WTC11 (cell line): ENCODE measurements at regions of chr3 and their contacts with region 1.

Region 1: GRCh38 chr3:129942296-129942695 is 32.2 kb upstream of the TRH start:
- DNase-seq: peak; percentile 88
- ATAC-seq: peak; percentile 97
- H3K4me3 Mint-ChIP-seq: no peak overlapping the region
- H3K27ac Mint-ChIP-seq: no peak overlapping the region
- H3K4me1 Mint-ChIP-seq: peaks cover 9% of the 10 kb centered on the region
- H3K27me3 Mint-ChIP-seq: peaks cover 12% of the 10 kb centered on the region
- CTCF ChIP-seq: peak; percentile 59

Region 2: GRCh38 chr3:129627429-129628168 is 314.7 kb before region 1 on chr3:
- CTCF ChIA-PET with region 1: interaction called, 32 read pairs
- POLR2A ChIA-PET with region 1: interaction called, 4 read pairs
- DNase-seq: peak; percentile 80
- ATAC-seq: peak; percentile 59
- H3K4me3 Mint-ChIP-seq: peak overlapping the region; percentile 89
- H3K27ac Mint-ChIP-seq: peak overlapping the region; percentile 94
- H3K4me1 Mint-ChIP-seq: peaks cover 24% of the 10 kb centered on the region
- H3K27me3 Mint-ChIP-seq: no peaks in the 10 kb centered on the region
- CTCF ChIP-seq: 0 out of 2 replicates have a peak, but pooled peaks have one; percentile 14

Region 3: DNA sequence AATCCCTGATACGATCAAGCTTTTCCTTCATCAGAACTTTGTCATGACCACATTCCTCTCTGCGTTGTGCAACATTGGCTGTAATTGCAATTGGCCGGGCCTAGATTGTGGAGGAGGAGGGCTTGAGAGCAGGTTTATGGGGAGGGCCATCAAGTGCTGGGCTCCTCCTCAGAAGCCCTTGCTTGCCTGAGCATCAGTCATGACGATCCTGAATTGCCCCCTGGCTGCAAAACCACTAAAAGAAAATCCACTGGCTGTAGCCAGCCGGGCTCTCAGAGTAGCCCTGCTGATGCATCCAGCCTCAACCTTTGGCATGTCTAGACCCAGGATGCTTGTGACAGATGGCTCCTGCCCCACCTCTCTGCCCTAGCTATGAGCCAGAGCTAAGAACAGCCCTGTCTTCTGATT is 18.8 kb after region 1 on chr3:
- CTCF ChIA-PET with region 1: interaction called, 15 read pairs
- POLR2A ChIA-PET with region 1: no interaction called
- DNase-seq: no peak
- ATAC-seq: no peak
- H3K4me3 Mint-ChIP-seq: no peak overlapping the region
- H3K27ac Mint-ChIP-seq: no peak overlapping the region
- H3K4me1 Mint-ChIP-seq: no peaks in the 10 kb centered on the region
- H3K27me3 Mint-ChIP-seq: peaks cover 44% of the 10 kb centered on the region
- CTCF ChIP-seq: no peak

Region 4: DNA sequence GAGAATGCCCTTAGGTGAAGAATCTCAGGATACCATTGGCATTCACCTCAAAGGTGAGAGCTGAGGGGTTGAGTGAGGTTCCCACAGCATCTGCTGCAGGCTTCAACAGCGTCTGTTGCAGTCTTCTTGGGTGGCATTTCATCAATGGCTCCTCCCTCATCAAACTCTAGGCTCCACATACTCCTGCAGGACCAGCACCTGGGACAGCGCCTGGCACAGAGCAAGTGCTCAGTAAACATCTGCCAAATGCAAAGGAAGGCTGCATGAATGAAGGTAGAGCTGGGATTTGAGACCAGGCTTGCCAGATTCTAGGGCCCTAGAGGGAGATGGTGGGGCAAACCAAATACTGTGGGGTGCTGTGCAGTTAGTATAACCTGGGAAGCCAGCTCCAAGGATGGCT is 41.8 kb after region 1 on chr3:
- CTCF ChIA-PET with region 1: interaction called, 32 read pairs
- POLR2A ChIA-PET with region 1: no interaction called
- DNase-seq: peak; percentile 38
- ATAC-seq: peak; percentile 53; the same call in 1 of the 2 replicates
- H3K4me3 Mint-ChIP-seq: no peak overlapping the region
- H3K27ac Mint-ChIP-seq: no peak overlapping the region
- H3K4me1 Mint-ChIP-seq: no peaks in the 10 kb centered on the region
- H3K27me3 Mint-ChIP-seq: peaks cover 46% of the 10 kb centered on the region
- CTCF ChIP-seq: no peak

Region 5: GRCh38 chr3:130093741-130094391 is 151.6 kb after region 1 on chr3:
- CTCF ChIA-PET with region 1: interaction called, 134 read pairs
- POLR2A ChIA-PET with region 1: interaction called, 3 read pairs
- DNase-seq: peak; percentile 60
- ATAC-seq: peak; percentile 32; the same call in 1 of the 2 replicates
- H3K4me3 Mint-ChIP-seq: no peak overlapping the region
- H3K27ac Mint-ChIP-seq: no peak overlapping the region
- H3K4me1 Mint-ChIP-seq: peaks cover 28% of the 10 kb centered on the region
- H3K27me3 Mint-ChIP-seq: 0 out of 2 replicates have a peak, but pooled peaks cover 6% of the 10 kb centered on the region
- CTCF ChIP-seq: no peak